ENCODE measurements at regions of chr11 and their contacts with region 1.

Region 1: DNA sequence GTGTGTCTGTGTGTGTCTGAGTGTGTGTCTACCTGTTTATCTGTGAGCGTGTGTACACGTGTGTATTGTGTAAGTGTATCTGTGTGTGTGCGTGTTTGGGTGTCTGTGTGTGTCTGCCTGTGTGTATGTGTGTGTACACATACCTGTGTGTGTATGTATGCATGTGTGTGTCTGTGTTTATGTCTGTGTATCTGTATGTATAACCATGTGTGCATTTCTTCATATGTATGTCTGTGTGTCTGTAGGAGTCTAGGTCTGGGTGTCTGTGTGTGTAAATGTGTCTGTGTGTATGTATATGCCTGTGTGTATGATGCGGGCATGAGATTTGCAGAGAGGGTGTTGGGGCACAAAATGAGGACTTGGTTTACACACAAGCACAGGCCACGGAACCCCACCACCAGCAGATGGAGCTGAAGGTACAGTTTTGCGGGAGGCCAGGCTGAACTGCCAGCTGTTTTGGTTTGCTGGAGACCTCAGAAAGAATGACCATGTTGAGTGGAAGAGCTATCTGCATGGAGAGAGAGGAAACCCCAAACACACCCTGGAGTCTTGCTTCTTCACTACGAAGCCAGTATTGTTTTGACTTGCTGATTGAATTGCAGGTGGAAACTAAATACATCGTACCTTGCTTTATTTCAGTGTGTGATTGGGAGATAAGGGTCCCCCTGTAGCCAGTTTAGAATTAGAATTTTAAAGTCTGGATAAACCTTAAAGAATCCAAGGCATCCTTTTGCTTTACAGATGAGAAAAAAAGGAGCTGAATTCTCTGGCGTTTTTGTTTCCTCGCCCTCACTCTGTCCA is 497.2 kb downstream of the NTM start:
- DNase-seq: peak; percentile 20
- ATAC-seq: peak; percentile 91
- H3K4me3 ChIP-seq: no peak overlapping the region
- H3K27ac ChIP-seq: no peak overlapping the region
- H3K4me1 ChIP-seq: no peaks in the 10 kb centered on the region
- H3K27me3 ChIP-seq: peaks cover 0 to 14% of the 10 kb centered on the region in 2 experiments; a peak in 2 of 5 replicates
- CTCF ChIP-seq: peak; percentile 72
- EP300 ChIP-seq: no peak
- POLR2A ChIP-seq: no peak
- RAD21 ChIP-seq: peak; percentile 49

Region 2: GRCh38 chr11:131841028-131841427 is 26.6 kb before region 1 on chr11:
- CTCF ChIA-PET with region 1: no interaction called
- POLR2A ChIA-PET with region 1: no interaction called
- in situ Hi-C with region 1: no loop called
- intact Hi-C with region 1: no loop called
- DNase-seq: no peak
- ATAC-seq: no peak
- H3K4me3 ChIP-seq: no peak overlapping the region
- H3K27ac ChIP-seq: no peak overlapping the region
- H3K4me1 ChIP-seq: no peaks in the 10 kb centered on the region
- H3K27me3 ChIP-seq: no peaks in the 10 kb centered on the region
- CTCF ChIP-seq: no peak
- EP300 ChIP-seq: no peak
- POLR2A ChIP-seq: no peak
- RAD21 ChIP-seq: no peak

Region 3: DNA sequence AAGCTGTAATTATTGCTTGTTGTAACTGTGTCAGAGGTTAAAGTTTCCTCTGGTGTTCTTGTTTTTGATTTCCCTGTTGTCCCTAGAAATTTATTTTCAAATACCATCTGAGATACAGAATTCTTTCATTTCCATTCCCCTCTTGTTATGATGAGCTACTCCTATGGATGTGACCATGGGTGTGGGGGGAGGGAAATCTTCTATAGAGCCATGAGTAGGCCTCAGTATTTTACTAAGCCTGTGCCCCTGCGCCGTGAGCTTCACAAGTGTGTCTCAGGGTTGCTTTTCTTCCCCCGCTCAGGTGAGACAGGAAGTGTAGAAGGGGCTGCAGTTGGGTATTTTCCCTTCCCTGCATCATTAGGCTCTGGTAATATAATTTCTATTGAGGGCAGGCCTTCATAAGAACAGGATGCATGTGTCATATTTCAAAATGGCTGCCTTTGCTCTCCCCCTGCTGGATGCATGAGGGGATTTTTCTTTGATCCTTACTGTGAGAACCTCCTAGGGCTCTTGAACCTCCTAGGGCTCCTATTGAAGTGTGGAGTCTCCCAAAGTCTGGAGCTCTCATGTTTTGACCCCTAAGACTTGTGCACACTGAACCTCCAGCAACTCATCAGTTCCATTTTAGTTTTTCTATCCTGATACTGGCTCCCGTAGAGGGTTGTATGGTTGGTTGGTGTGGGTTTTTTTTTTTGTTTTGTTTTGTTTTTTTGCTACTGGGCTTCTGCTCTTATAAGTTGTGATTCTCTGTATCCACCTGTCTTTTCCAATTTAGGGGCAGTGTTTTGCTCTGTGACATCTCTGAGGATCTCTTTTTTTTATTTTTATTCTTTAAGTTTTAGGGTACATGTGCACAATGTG is 161.0 kb after region 1 on chr11:
- CTCF ChIA-PET with region 1: interaction called, 10 read pairs
- POLR2A ChIA-PET with region 1: no interaction called
- in situ Hi-C with region 1: loop called (anchors 10 kb)
- intact Hi-C with region 1: no loop called
- DNase-seq: peak; percentile 16
- ATAC-seq: peak; percentile 82
- H3K4me3 ChIP-seq: no peak overlapping the region
- H3K27ac ChIP-seq: no peak overlapping the region
- H3K4me1 ChIP-seq: no peaks in the 10 kb centered on the region
- H3K27me3 ChIP-seq: no peaks in the 10 kb centered on the region
- CTCF ChIP-seq: peak; percentile 64
- EP300 ChIP-seq: no peak
- POLR2A ChIP-seq: no peak
- RAD21 ChIP-seq: no peak

Region 4: DNA sequence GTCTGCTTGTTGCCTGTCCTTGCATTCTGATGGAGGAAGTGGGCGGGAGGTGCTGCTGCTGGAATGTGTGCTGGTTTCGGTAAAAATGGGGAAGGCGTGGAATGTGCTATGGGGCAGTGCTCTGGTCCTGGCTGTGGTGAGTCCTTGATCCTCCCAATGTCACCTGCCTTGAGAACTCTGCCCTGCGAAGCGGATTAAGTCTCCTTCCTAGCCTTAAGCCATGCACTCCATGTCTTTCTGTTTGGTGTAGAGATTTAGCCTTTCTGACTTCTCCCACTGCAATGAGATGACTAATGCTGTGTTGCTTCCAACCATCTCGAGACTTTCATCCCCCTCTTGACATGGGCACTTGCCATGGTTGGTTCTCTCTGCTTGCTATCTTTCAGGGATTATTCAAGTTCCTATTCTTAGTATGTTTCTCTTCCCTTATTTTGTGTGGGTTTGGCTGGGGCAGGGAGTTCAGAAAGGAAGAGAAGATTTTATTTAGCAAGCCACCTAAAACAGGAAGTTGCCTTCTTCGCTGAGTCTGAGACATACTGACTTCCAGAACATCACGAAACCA is 190.6 kb after region 1 on chr11:
- CTCF ChIA-PET with region 1: no interaction called
- POLR2A ChIA-PET with region 1: no interaction called
- in situ Hi-C with region 1: no loop called
- intact Hi-C with region 1: no loop called
- DNase-seq: no peak
- ATAC-seq: no peak
- H3K4me3 ChIP-seq: no peak overlapping the region
- H3K27ac ChIP-seq: no peak overlapping the region
- H3K4me1 ChIP-seq: no peaks in the 10 kb centered on the region
- H3K27me3 ChIP-seq: no peaks in the 10 kb centered on the region
- CTCF ChIP-seq: no peak
- EP300 ChIP-seq: no peak
- POLR2A ChIP-seq: no peak
- RAD21 ChIP-seq: no peak

Region 5: DNA sequence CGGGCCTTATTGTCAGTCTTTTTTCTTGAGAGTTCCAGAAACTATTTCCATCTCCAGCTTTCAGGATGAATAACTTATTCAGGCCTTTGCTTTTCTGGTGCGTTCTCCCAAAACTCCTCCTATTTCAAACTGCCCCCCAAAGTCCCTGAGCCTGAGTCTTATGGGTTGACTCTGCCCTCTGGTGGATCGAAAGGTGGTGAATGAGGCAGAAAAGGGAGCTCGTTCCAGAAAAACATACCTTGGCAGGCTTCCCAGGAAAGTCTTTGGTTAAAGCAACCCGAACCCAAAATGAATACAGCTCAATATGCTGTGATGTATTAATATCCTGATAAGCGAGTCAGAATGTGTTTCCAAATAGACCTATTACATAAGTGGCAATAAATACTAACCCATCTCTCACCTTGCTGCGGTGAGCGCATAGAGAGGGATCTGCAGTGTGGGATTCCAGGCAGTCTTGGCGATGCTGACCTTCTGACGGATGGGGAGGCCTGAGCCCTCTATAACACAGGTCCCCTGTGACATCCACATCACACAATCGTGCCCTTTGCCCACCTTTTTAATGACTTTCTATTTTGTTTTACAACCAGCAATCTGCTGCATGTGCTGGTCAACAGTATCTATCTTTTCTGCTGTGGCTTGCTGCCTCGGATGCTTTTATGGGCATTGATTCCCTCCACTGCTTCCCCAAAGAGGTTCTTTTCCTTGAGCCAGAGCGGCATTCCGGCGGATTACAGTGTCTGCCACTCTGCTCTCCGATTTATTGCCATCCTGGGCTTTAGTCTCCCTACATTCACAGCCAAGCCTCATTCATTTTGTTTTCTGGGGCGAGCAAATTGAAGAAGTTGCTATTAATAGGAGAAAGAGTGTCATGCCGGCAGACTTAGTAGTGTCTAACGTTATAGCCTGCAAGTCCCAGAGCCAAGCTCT is 259.6 kb after region 1 on chr11:
- CTCF ChIA-PET with region 1: no interaction called
- POLR2A ChIA-PET with region 1: no interaction called
- in situ Hi-C with region 1: loop called (anchors 25 kb)
- intact Hi-C with region 1: no loop called
- DNase-seq: peak; percentile 3
- ATAC-seq: no peak; the same call in 2 of the 3 replicates
- H3K4me3 ChIP-seq: no peak overlapping the region
- H3K27ac ChIP-seq: no peak overlapping the region
- H3K4me1 ChIP-seq: no peaks in the 10 kb centered on the region
- H3K27me3 ChIP-seq: 0 out of 5 replicates have a peak, but pooled peaks cover 0 to 8% of the 10 kb centered on the region in 2 experiments
- CTCF ChIP-seq: 0 out of 2 replicates have a peak, but pooled peaks have one; percentile 18
- EP300 ChIP-seq: no peak
- POLR2A ChIP-seq: no peak
- RAD21 ChIP-seq: no peak

Region 6: GRCh38 chr11:132941024-132941646 is 1073.5 kb after region 1 on chr11:
- CTCF ChIA-PET with region 1: interaction called, 3 read pairs
- POLR2A ChIA-PET with region 1: no interaction called
- in situ Hi-C with region 1: loop called (anchors 25 kb)
- intact Hi-C with region 1: no loop called
- DNase-seq: no peak
- ATAC-seq: no peak
- H3K4me3 ChIP-seq: no peak overlapping the region
- H3K27ac ChIP-seq: no peak overlapping the region
- H3K4me1 ChIP-seq: no peaks in the 10 kb centered on the region
- H3K27me3 ChIP-seq: 0 out of 5 replicates have a peak, but pooled peaks cover 0 to 7% of the 10 kb centered on the region in 2 experiments
- CTCF ChIP-seq: peak; percentile 55
- EP300 ChIP-seq: no peak
- POLR2A ChIP-seq: no peak
- RAD21 ChIP-seq: no peak

Region 7: GRCh38 chr11:133064152-133064877 is 1196.7 kb after region 1 on chr11:
- CTCF ChIA-PET with region 1: no interaction called
- POLR2A ChIA-PET with region 1: no interaction called
- in situ Hi-C with region 1: loop called (anchors 25 kb)
- intact Hi-C with region 1: loop called (anchors 10 kb)
- DNase-seq: peak; percentile 16
- ATAC-seq: peak; percentile 96
- H3K4me3 ChIP-seq: peak overlapping the region in 1 of 3 experiments; percentile 37; a peak in 2 of 6 replicates
- H3K27ac ChIP-seq: no peak overlapping the region
- H3K4me1 ChIP-seq: no peaks in the 10 kb centered on the region
- H3K27me3 ChIP-seq: peaks cover 0 to 18% of the 10 kb centered on the region in 2 experiments; a peak in 3 of 5 replicates
- CTCF ChIP-seq: peak; percentile 84
- EP300 ChIP-seq: no peak
- POLR2A ChIP-seq: no peak
- RAD21 ChIP-seq: peak; percentile 69; the same call in 1 of the 2 replicates

Measured in HepG2 (cell line).